ENCODE measurements at regions of chr2 and their contacts with region 1.

Region 1: GRCh38 chr2:30711646-30712085 is 95.6 kb downstream of the CAPN13 start:
- DNase-seq: peak; percentile 68 to 93
- H3K4me3 ChIP-seq: no peak overlapping the region
- H3K27ac ChIP-seq: no peak overlapping the region
- H3K4me1 ChIP-seq: no peaks in the 10 kb centered on the region
- H3K27me3 ChIP-seq: no peaks in the 10 kb centered on the region
- CTCF ChIP-seq: peak; percentile 95 to 100 (median 100)
- EP300 ChIP-seq: no peak
- POLR2A ChIP-seq: no peak
- RAD21 ChIP-seq: peak; percentile 91 to 94

Region 2: DNA sequence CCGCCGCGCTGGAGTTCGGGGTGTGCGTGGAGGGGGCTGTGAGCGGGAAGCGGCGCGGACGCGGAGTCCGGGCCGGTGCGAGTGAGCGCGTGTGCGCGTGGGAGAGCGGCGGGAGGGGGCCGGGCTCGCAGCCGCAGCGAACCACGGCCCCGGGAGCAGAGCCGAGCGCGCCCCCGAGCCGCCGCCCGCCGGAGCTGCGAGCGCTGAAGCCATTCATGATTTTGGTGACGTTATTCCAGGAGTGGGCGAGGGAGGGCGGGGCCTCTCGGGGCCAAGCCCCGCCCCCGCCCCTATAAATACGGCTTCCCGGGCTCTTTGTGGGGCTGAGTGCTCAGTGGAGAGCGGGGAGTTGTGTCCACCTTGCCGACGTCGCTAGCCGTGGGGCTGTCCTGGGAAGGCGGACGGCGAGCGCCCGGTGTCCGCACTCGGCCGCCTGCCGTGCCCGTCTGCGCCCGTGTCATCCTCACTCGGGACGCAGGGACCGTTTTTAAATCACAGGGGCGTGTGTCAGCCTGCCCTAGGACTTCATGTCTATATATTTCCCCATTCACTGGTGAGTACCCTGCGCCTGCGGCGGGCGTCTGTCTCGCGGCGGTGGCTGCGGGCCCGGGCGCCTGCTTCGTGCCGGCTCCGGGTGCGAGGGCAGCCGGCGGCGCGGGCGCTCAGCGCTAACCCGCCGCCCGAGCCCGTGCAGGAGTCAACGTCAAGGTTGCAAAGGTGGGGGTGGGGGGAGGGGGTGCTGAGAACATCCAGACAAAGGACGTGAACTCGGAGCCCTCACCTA is 480.3 kb before region 1 on chr2 and contains the start of gene LBH:
- CTCF ChIA-PET with region 1: interaction called, 12 read pairs
- POLR2A ChIA-PET with region 1: no interaction called
- DNase-seq: peak; percentile 66 to 78
- H3K4me3 ChIP-seq: peak within 1 kb of the TSS; percentile 67 to 81 (median 70)
- H3K27ac ChIP-seq: 0 out of 2 replicates have a peak within 1 kb of the TSS, but pooled peaks have one; percentile 7
- H3K4me1 ChIP-seq: peaks cover 0 to 9% (median 5%) of the 10 kb centered on the region in 4 experiments; a peak in 4 of 7 replicates
- H3K27me3 ChIP-seq: peaks cover 3 to 25% (median 20%) of the 10 kb centered on the region in 4 experiments
- CTCF ChIP-seq: no peak
- EP300 ChIP-seq: no peak
- POLR2A ChIP-seq: peak; percentile 95 to 97
- RAD21 ChIP-seq: no peak
- total RNA-seq, gene LBH: 24.6 and 25.7 TPM in 2 replicates

Region 3: GRCh38 chr2:30511122-30512083 is 200.3 kb before region 1 on chr2:
- CTCF ChIA-PET with region 1: no interaction called
- POLR2A ChIA-PET with region 1: no interaction called
- DNase-seq: no peak
- H3K4me3 ChIP-seq: no peak overlapping the region
- H3K27ac ChIP-seq: no peak overlapping the region
- H3K4me1 ChIP-seq: peaks cover 0 to 19% (median 5%) of the 10 kb centered on the region in 4 experiments; a peak in 3 of 7 replicates
- H3K27me3 ChIP-seq: no peaks in the 10 kb centered on the region
- CTCF ChIP-seq: no peak
- EP300 ChIP-seq: no peak
- POLR2A ChIP-seq: no peak
- RAD21 ChIP-seq: no peak

Region 4: GRCh38 chr2:30730736-30731647 is 19.3 kb after region 1 on chr2:
- CTCF ChIA-PET with region 1: interaction called, 58 read pairs
- POLR2A ChIA-PET with region 1: no interaction called
- DNase-seq: no peak
- H3K4me3 ChIP-seq: no peak overlapping the region
- H3K27ac ChIP-seq: no peak overlapping the region
- H3K4me1 ChIP-seq: no peaks in the 10 kb centered on the region
- H3K27me3 ChIP-seq: no peaks in the 10 kb centered on the region
- CTCF ChIP-seq: no peak
- EP300 ChIP-seq: no peak
- POLR2A ChIP-seq: no peak
- RAD21 ChIP-seq: no peak

Region 5: DNA sequence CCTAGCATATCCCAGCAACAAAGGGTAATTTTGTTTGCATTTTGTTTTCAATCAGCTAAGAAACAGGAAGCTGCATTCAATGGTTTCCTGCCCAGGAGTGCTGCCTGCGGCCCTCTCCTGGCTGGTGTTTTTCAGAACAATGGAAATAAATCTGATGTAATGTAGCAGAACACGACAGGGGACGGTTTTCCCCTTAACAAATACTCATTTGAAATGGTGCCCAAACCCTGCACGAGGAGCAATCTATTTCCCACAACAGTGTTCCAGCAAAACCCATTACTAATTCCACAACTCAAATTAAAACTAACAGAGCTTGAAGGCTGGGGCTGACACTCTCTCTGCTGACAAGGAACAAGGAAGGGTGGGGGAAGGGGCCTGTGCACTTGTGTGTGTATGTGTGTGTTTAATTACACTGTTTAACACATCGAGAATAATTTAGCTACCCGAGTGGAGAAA is 86.9 kb after region 1 on chr2:
- CTCF ChIA-PET with region 1: interaction called, 15 read pairs
- POLR2A ChIA-PET with region 1: no interaction called
- DNase-seq: peak in 1 of 2 experiments; percentile 10
- H3K4me3 ChIP-seq: no peak overlapping the region
- H3K27ac ChIP-seq: peak overlapping the region; percentile 28; the same call in 1 of the 2 replicates
- H3K4me1 ChIP-seq: peaks cover 2 to 13% (median 10%) of the 10 kb centered on the region in 4 experiments; a peak in 5 of 7 replicates
- H3K27me3 ChIP-seq: no peaks in the 10 kb centered on the region
- CTCF ChIP-seq: no peak
- EP300 ChIP-seq: no peak
- POLR2A ChIP-seq: no peak
- RAD21 ChIP-seq: no peak

Region 6: DNA sequence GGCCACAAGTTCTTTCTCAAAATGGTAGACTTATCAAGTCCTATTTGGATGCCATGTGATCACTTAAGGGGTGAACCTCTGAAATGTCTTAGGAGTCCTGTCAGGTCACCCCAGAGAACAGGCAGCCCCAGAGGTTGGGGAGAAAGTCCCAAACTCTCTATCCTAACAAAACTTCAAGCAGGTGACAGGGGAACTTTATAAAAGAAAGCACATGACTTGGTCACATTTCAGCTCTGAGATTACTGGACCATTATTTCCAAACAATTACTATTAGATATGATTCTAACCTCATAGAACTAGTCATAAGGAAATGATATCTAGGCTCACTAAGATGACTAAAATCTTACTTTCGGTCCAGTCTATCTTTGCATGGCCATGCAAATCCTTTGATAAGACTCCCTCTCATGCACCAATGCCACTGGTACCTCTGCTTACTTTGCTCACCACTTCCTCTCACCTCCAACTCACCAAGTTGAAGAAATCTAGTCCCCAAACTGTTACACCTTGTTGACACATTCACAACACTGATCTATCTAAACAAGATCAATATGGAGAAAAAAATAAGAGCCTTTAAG is 319.6 kb after region 1 on chr2:
- CTCF ChIA-PET with region 1: interaction called, 32 read pairs
- POLR2A ChIA-PET with region 1: no interaction called
- DNase-seq: no peak
- H3K4me3 ChIP-seq: no peak overlapping the region
- H3K27ac ChIP-seq: no peak overlapping the region
- H3K4me1 ChIP-seq: peaks cover 0 to 6% (median 0%) of the 10 kb centered on the region in 4 experiments; a peak in 2 of 7 replicates
- H3K27me3 ChIP-seq: no peaks in the 10 kb centered on the region
- CTCF ChIP-seq: no peak
- EP300 ChIP-seq: no peak
- POLR2A ChIP-seq: no peak
- RAD21 ChIP-seq: no peak

Measured in H1 (cell line).